ENCODE measurements at regions of chr3 and their contacts with region 1.

Region 1: GRCh38 chr3:43286115-43286840 is at the start of gene SNRK:
- DNase-seq: peak; percentile 99
- H3K4me3 ChIP-seq: peak within 1 kb of the TSS; percentile 60 to 100 (median 99)
- H3K27ac ChIP-seq: peak within 1 kb of the TSS; percentile 100
- H3K4me1 ChIP-seq: peaks cover 43% of the 10 kb centered on the region
- H3K27me3 ChIP-seq: no peaks in the 10 kb centered on the region
- CTCF ChIP-seq: peak; percentile 32 to 42
- POLR2A ChIP-seq: peak; percentile 87
- total RNA-seq, gene SNRK: 99.9 and 108 TPM in 2 replicates

Region 2: GRCh38 chr3:43113671-43114070 is 172.6 kb before region 1 on chr3:
- CTCF ChIA-PET with region 1: no interaction called
- POLR2A ChIA-PET with region 1: no interaction called
- dilution Hi-C with region 1: no loop called
- intact Hi-C with region 1: no loop called
- DNase-seq: no peak
- H3K4me3 ChIP-seq: no peak overlapping the region
- H3K27ac ChIP-seq: no peak overlapping the region
- H3K4me1 ChIP-seq: no peaks in the 10 kb centered on the region
- H3K27me3 ChIP-seq: peaks cover 4 to 11% of the 10 kb centered on the region in 2 experiments
- CTCF ChIP-seq: no peak
- POLR2A ChIP-seq: no peak

Region 3: DNA sequence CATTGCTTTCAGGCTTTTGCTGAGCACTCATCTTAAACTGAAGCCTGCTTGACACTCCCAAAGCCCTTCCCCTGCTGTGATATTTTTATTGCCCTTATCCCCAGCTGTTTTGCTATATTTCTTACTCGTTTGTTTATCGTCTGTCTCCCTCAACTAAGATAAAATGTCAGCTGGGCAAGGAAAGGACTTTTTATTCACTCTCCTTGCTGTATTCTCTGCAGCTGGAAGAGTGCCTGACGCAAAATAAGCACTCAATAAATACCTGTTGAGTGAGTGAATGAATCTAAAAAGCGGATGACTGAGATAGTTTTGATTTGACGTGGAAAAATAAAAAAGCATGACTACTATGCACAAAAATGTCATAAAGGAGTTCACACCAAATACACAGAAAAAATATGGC is 95.6 kb before region 1 on chr3:
- CTCF ChIA-PET with region 1: interaction called, 12 read pairs
- POLR2A ChIA-PET with region 1: no interaction called
- dilution Hi-C with region 1: no loop called
- intact Hi-C with region 1: no loop called
- DNase-seq: peak; percentile 52
- H3K4me3 ChIP-seq: no peak overlapping the region
- H3K27ac ChIP-seq: peak overlapping the region; percentile 90
- H3K4me1 ChIP-seq: peaks cover 67% of the 10 kb centered on the region
- H3K27me3 ChIP-seq: no peaks in the 10 kb centered on the region
- CTCF ChIP-seq: no peak
- POLR2A ChIP-seq: no peak

Region 4: GRCh38 chr3:43246976-43247375 is 39.3 kb before region 1 on chr3:
- CTCF ChIA-PET with region 1: interaction called, 21 read pairs
- POLR2A ChIA-PET with region 1: interaction called, 10 read pairs
- dilution Hi-C with region 1: no loop called
- intact Hi-C with region 1: loop called (anchors 1 kb)
- DNase-seq: peak; percentile 97
- H3K4me3 ChIP-seq: no peak overlapping the region
- H3K27ac ChIP-seq: peak overlapping the region; percentile 99
- H3K4me1 ChIP-seq: peaks cover 47% of the 10 kb centered on the region
- H3K27me3 ChIP-seq: no peaks in the 10 kb centered on the region
- CTCF ChIP-seq: no peak
- POLR2A ChIP-seq: peak; percentile 55

Region 5: GRCh38 chr3:43379343-43379742 is 93.1 kb after region 1 on chr3:
- CTCF ChIA-PET with region 1: no interaction called
- POLR2A ChIA-PET with region 1: no interaction called
- dilution Hi-C with region 1: no loop called
- intact Hi-C with region 1: no loop called
- DNase-seq: no peak
- H3K4me3 ChIP-seq: no peak overlapping the region
- H3K27ac ChIP-seq: no peak overlapping the region
- H3K4me1 ChIP-seq: peaks cover 4% of the 10 kb centered on the region
- H3K27me3 ChIP-seq: no peaks in the 10 kb centered on the region
- CTCF ChIP-seq: no peak
- POLR2A ChIP-seq: no peak

Region 6: GRCh38 chr3:43621656-43622432 is 335.6 kb after region 1 on chr3 and contains the start of gene ANO10:
- CTCF ChIA-PET with region 1: no interaction called
- POLR2A ChIA-PET with region 1: no interaction called
- dilution Hi-C with region 1: no loop called
- intact Hi-C with region 1: loop called (anchors 2 kb)
- DNase-seq: peak; percentile 99
- H3K4me3 ChIP-seq: peak within 1 kb of the TSS; percentile 75 to 83 (median 81)
- H3K27ac ChIP-seq: peak within 1 kb of the TSS; percentile 63
- H3K4me1 ChIP-seq: peaks cover 10% of the 10 kb centered on the region
- H3K27me3 ChIP-seq: no peaks in the 10 kb centered on the region
- CTCF ChIP-seq: no peak
- POLR2A ChIP-seq: peak; percentile 69
- total RNA-seq, gene ANO10: 40.9 and 45.8 TPM in 2 replicates

Region 7: DNA sequence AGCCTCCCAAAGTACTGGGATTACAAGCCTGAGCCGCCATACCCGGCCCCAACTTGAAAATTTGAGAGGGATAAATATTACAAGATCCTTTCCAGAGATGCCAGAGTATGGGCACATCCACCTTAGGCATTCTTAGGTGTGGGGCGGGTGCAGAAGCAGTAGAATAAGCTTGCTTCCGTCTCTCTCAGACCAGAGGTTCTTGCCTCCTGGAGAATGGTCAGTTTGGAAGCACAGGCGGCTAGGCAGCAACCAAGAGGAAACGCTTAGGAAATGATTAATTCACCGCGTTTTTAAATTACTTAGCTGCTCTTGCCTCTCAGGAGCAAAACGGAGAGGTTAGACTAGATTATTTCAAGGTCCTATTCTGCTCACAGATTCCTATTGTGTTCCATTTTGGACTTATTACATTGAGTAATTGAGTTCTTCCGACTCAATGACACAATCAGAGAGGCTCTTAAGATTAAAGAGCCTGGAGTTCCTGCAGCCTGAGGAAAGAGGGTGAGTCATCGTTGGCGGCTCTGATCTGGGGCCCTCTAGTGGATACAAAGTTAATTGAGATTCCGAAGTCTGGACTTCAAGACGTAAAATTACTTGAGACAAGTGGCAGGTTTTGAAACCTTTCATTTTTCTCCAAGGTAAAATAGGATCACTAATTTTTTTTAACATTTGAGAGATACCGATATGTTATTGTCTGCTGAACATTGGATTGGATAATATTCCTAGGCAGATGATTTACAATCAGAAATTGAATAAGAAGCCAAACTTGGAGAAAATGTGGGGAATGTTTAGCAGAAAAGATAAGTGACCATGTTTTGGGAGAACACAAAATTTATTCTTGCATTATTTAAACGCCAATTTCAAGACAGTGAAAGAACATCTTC is 949.6 kb after region 1 on chr3:
- CTCF ChIA-PET with region 1: no interaction called
- POLR2A ChIA-PET with region 1: no interaction called
- dilution Hi-C with region 1: no loop called
- intact Hi-C with region 1: loop called (anchors 5 kb)
- DNase-seq: peak; percentile 96
- H3K4me3 ChIP-seq: no peak overlapping the region
- H3K27ac ChIP-seq: peak overlapping the region; percentile 57
- H3K4me1 ChIP-seq: peaks cover 12% of the 10 kb centered on the region
- H3K27me3 ChIP-seq: no peaks in the 10 kb centered on the region
- CTCF ChIP-seq: peak; percentile 59 to 86
- POLR2A ChIP-seq: no peak